IMR-90 (cell line): ENCODE measurements at regions of chr12 and their contacts with region 1.

Region 1: DNA sequence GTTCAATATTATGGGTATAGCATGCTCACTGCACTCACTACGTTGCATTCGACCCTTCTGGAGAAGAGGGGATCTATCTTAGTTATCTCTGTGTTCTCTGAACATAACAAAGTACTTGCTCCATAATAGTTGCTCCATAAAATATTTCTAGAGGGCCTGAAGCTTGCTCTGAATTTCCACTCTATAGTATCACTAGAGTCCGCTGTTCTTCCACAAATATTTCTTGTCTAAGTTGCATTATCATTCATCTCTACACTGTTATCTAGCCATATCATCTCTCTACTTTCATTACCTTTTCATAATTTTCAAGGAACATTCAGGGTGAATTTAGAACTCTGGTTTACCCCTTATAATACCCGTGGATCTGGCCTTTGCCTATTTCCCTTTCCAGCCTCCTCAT is 246.1 kb upstream of the PDE3A start:
- DNase-seq: no peak
- ATAC-seq: no peak
- H3K4me3 ChIP-seq: no peak overlapping the region
- H3K27ac ChIP-seq: no peak overlapping the region
- H3K4me1 ChIP-seq: no peaks in the 10 kb centered on the region
- H3K27me3 ChIP-seq: no peaks in the 10 kb centered on the region
- CTCF ChIP-seq: no peak
- POLR2A ChIP-seq: no peak
- RAD21 ChIP-seq: no peak

Region 2: GRCh38 chr12:19186722-19187661 is 935.3 kb before region 1 on chr12:
- CTCF ChIA-PET with region 1: no interaction called
- POLR2A ChIA-PET with region 1: no interaction called
- dilution Hi-C with region 1: no loop called
- in situ Hi-C with region 1: no loop called
- intact Hi-C with region 1: no loop called
- DNase-seq: peak; percentile 71
- ATAC-seq: peak; percentile 46; the same call in 1 of the 2 replicates
- H3K4me3 ChIP-seq: no peak overlapping the region
- H3K27ac ChIP-seq: no peak overlapping the region
- H3K4me1 ChIP-seq: peaks cover 10% of the 10 kb centered on the region
- H3K27me3 ChIP-seq: no peaks in the 10 kb centered on the region
- CTCF ChIP-seq: peak; percentile 68
- POLR2A ChIP-seq: no peak
- RAD21 ChIP-seq: peak; percentile 73

Region 3: GRCh38 chr12:19988459-19988873 is 133.8 kb before region 1 on chr12:
- CTCF ChIA-PET with region 1: no interaction called
- POLR2A ChIA-PET with region 1: no interaction called
- dilution Hi-C with region 1: no loop called
- in situ Hi-C with region 1: no loop called
- intact Hi-C with region 1: no loop called
- DNase-seq: no peak
- ATAC-seq: peak; percentile 46
- H3K4me3 ChIP-seq: no peak overlapping the region
- H3K27ac ChIP-seq: peak overlapping the region; percentile 22; the same call in 1 of the 2 replicates
- H3K4me1 ChIP-seq: peaks cover 3% of the 10 kb centered on the region
- H3K27me3 ChIP-seq: no peaks in the 10 kb centered on the region
- CTCF ChIP-seq: no peak
- POLR2A ChIP-seq: no peak
- RAD21 ChIP-seq: no peak

Region 4: GRCh38 chr12:20105943-20106342 is 16.3 kb before region 1 on chr12:
- CTCF ChIA-PET with region 1: no interaction called
- POLR2A ChIA-PET with region 1: no interaction called
- dilution Hi-C with region 1: no loop called
- in situ Hi-C with region 1: no loop called
- intact Hi-C with region 1: loop called (anchors 2 kb)
- DNase-seq: peak; percentile 65
- ATAC-seq: peak; percentile 83
- H3K4me3 ChIP-seq: no peak overlapping the region
- H3K27ac ChIP-seq: no peak overlapping the region
- H3K4me1 ChIP-seq: peaks cover 6% of the 10 kb centered on the region
- H3K27me3 ChIP-seq: no peaks in the 10 kb centered on the region
- CTCF ChIP-seq: no peak
- POLR2A ChIP-seq: no peak
- RAD21 ChIP-seq: no peak